ENCODE measurements at regions of chr9 and their contacts with region 1.

Region 1: DNA sequence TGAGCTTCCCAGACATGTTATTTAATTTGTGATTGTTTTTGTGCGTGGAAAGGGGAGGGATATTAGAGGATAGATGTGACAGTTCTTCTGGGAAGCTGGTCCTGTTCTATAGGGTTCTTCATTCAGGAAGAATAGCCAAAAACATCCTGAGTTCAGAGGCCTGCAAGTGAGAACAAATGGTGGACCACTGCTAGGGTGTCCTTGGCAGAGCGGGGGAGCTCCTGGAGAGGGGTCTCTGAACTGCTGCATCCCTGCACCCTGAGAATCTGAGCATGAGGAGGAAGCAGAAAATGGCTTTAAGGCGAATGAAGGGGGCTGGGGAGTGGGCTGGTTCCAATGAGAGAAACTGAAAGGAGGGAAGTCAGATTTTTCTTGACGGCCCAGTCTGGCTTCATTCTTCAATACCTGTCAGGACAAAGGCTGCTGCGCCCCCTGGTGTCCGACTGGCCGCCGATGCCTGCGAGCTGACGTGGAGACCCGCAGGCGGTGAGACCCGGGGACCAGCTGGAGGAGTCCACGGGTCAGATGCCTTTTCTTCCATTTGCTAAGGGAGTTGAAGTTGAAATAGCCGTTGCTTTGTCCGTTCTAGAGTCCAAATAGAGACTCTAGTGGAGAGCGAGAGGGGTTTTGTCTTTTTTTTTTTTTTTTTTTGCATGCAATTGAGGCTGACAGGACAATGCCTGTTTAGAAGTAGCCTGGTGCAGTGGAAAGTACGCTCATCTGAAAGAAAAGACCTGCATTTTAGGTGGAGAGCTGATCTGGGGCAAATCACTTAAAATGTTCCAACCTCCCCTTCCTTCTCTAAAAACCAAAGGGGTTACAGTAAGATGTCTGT is 39.5 kb upstream of the NFIB start:
- DNase-seq: peak; percentile 90
- H3K4me3 Mint-ChIP-seq: peak overlapping the region; percentile 52
- H3K27ac Mint-ChIP-seq: no peak overlapping the region
- H3K4me1 Mint-ChIP-seq: peaks cover 13% of the 10 kb centered on the region
- H3K27me3 Mint-ChIP-seq: no peaks in the 10 kb centered on the region
- CTCF ChIP-seq: peak; percentile 50

Region 2: DNA sequence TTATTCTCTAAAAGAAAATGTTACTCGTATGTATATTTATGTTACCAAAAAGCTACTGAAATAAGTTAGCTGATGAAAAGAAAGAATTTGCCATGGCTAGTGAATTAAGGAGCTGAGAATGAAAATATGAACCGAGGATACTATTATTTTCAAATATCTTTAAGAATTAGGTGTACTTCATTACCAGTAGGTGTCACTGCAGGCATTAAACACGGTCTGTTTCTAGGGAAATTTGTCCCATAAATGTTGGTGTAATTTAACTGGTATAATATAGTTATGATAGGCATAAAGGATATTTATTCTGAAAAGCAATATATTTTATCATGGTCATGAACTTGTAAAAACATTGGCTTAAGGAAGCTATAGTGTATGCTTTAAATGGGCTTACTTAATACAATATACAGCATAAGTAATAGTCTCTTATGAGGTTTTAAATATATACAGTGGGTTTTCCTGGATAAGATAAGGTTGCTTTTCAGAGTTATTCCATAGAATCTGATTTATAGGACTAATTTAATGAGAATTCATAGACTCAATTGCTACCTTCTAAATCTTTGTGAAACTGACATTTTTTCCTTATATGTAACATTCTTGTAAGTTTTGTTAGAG is 1001.6 kb before region 1 on chr9:
- CTCF ChIA-PET with region 1: no interaction called
- intact Hi-C with region 1: loop called (anchors 5 kb)
- DNase-seq: no peak
- H3K4me3 Mint-ChIP-seq: no peak overlapping the region
- H3K27ac Mint-ChIP-seq: no peak overlapping the region
- H3K4me1 Mint-ChIP-seq: no peaks in the 10 kb centered on the region
- H3K27me3 Mint-ChIP-seq: no peaks in the 10 kb centered on the region
- CTCF ChIP-seq: peak; percentile 32

Region 3: DNA sequence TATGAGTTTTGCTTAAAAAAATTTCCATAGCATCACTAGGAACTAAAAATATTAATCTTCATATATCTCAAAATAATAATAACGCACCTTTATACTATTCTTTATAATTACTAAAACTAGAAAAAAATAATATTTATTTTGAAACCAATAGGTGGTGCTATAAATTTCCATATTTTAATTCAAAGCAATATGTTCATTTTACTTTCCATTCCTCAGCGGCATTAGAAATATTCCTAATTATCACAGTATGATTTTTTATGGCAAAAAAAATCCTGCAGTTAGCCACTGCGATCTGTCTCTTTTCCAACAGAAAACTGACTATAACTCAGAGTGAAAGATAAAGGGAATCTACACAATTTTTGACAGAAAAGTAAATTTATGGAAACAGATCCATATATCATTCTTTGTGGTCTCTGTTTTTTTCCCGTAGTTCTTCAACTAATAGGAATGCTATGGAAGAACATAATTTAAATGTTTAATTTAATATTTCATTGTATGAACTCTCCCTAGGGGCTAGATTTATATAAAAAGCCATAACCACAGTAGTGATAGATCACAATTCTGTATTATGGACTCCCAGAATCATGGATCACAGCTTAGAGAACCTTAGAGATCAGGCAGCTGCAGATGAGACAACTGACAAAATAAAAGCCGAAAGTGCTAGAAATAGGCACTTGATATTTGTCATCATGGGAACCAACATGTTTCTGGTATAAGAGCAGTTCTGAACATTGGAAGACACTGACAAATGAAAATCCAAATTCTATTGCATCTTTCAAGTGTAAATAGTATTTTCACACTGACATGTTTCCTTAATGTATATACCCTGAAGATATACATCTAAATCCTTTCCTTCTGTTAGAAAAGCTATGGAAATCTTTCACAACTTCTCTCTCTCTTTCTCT is 906.2 kb before region 1 on chr9:
- CTCF ChIA-PET with region 1: no interaction called
- intact Hi-C with region 1: loop called (anchors 5 kb)
- DNase-seq: no peak
- H3K4me3 Mint-ChIP-seq: no peak overlapping the region
- H3K27ac Mint-ChIP-seq: no peak overlapping the region
- H3K4me1 Mint-ChIP-seq: peaks cover 9% of the 10 kb centered on the region
- H3K27me3 Mint-ChIP-seq: no peaks in the 10 kb centered on the region
- CTCF ChIP-seq: no peak

Region 4: DNA sequence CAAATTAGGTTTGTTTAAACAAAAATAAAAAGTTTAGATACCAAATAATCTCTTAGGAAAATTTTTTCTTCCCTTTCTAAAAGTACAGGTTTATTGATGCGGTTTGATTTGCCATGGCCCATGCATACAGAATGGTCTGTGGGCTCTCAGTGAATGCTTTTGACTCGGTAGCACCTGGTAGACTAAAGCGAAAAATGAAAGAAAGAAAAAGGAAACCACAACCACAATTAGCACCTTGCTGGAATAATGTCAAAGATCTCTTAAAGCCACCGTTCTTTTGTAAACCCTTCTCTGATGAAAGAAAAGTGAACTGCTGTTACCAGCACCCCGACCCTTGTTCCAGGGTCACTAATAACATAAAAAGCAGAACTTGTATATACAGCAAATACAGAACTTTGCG is 197.4 kb before region 1 on chr9:
- CTCF ChIA-PET with region 1: no interaction called
- intact Hi-C with region 1: no loop called
- DNase-seq: no peak
- H3K4me3 Mint-ChIP-seq: no peak overlapping the region
- H3K27ac Mint-ChIP-seq: no peak overlapping the region
- H3K4me1 Mint-ChIP-seq: peaks cover 36% of the 10 kb centered on the region
- H3K27me3 Mint-ChIP-seq: no peaks in the 10 kb centered on the region
- CTCF ChIP-seq: no peak